ENCODE measurements at regions of chr2 and their contacts with region 1.

Region 1: DNA sequence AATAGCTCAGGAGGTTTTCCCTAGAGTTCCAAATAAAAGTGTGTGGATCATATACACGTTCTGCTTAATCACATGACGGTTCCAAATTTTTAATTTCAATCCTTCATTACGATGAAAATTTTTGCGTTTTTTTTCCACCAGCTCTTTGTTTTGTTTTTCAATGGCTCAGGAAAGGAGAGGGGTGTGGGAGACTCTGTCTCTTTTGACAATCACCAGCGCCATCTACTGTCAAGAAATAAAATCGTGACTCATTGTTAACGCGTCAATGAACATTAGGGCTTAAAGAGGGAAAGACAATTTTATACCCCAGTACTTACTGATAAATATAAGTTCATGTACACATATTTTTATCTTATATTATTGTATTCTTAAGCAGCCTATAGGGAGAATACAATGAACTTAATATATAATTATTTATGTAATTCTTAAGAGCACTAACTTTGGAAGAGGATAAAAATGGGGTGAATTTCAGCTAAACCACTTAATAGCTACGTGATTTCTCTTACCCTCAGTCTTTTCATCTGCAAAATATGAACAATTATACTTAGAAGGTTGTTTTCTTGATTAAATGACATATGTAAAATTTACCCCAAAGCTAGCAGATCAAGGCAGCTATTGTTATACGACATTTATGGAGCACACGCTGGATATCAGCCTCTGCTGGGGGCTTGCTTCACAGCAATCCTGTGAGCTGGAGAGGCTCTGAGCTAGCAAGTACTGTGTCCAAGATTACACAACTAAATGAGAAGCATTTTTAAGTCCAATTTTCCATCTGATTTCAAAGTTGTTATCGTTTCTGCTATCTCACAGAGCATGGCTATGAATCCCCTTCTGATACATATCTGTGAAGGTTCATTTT is 47.4 kb upstream of the RMDN2 start:
- DNase-seq: peak; percentile 35
- ATAC-seq: peak; percentile 84
- H3K4me3 ChIP-seq: no peak overlapping the region
- H3K27ac ChIP-seq: no peak overlapping the region
- H3K4me1 ChIP-seq: no peaks in the 10 kb centered on the region
- H3K27me3 ChIP-seq: no peaks in the 10 kb centered on the region
- CTCF ChIP-seq: peak; percentile 45 to 76 (median 66); a peak in 5 of 6 replicates
- POLR2A ChIP-seq: no peak
- RAD21 ChIP-seq: peak; percentile 88

Region 2: DNA sequence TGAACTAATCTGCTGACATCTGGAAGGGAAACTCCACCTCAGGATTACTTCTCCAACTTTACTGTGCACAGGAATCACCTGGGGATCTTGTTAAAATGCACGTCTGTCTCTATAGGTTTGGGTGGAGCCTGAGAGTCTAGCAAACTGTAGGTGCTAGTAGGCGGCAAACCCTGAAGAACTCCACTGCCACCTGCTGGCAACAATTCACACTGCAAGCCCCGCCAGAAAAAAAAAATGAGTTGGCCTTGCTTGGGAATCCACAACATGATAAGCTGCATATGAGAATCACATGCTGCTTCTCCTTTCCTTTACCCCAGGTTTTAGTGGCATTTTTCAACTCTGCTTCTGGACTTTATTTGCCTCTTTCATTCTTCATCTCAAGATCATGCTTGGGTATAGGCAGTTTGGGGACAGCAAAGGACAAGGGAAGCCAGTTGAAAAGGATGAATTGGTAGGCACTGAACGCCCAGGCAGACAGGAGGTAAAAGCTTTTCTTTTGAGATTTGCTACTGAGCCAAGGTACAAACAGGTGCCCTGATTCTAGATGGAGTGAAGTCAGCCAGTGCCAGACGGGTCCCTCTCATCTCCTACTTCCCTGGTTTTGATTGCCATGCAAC is 1092.4 kb before region 1 on chr2:
- CTCF ChIA-PET with region 1: no interaction called
- POLR2A ChIA-PET with region 1: no interaction called
- RAD21 ChIA-PET with region 1: no interaction called
- intact Hi-C with region 1: loop called (anchors 5 kb)
- DNase-seq: peak; percentile 62
- ATAC-seq: peak; percentile 94
- H3K4me3 ChIP-seq: no peak overlapping the region
- H3K27ac ChIP-seq: no peak overlapping the region
- H3K4me1 ChIP-seq: 0 out of 4 replicates have a peak, but pooled peaks cover 0 to 3% of the 10 kb centered on the region in 2 experiments
- H3K27me3 ChIP-seq: no peaks in the 10 kb centered on the region; the same call in 1 of the 2 replicates
- CTCF ChIP-seq: peak; percentile 68 to 95 (median 94)
- POLR2A ChIP-seq: no peak
- RAD21 ChIP-seq: peak; percentile 70

Region 3: GRCh38 chr2:37287966-37288365 is 589.7 kb before region 1 on chr2:
- CTCF ChIA-PET with region 1: interaction called, 3 read pairs
- POLR2A ChIA-PET with region 1: no interaction called
- RAD21 ChIA-PET with region 1: interaction called in 1 of 2 experiments, 3 read pairs
- intact Hi-C with region 1: loop called (anchors 10 kb)
- DNase-seq: no peak
- ATAC-seq: peak; percentile 71
- H3K4me3 ChIP-seq: no peak overlapping the region
- H3K27ac ChIP-seq: no peak overlapping the region
- H3K4me1 ChIP-seq: peaks cover 0 to 4% of the 10 kb centered on the region in 2 experiments; a peak in 2 of 4 replicates
- H3K27me3 ChIP-seq: no peaks in the 10 kb centered on the region
- CTCF ChIP-seq: peak; percentile 11 to 40 (median 20); a peak in 1 of 6 replicates
- POLR2A ChIP-seq: no peak
- RAD21 ChIP-seq: peak; percentile 66

Region 4: GRCh38 chr2:37394263-37394662 is 483.4 kb before region 1 on chr2:
- CTCF ChIA-PET with region 1: interaction called, 129 read pairs
- POLR2A ChIA-PET with region 1: interaction called, 5 read pairs
- RAD21 ChIA-PET with region 1: interaction called, 20 to 29 read pairs
- intact Hi-C with region 1: loop called (anchors 1 kb)
- DNase-seq: no peak
- ATAC-seq: no peak
- H3K4me3 ChIP-seq: no peak overlapping the region
- H3K27ac ChIP-seq: no peak overlapping the region
- H3K4me1 ChIP-seq: peaks cover 3 to 18% of the 10 kb centered on the region in 2 experiments; a peak in 3 of 4 replicates
- H3K27me3 ChIP-seq: no peaks in the 10 kb centered on the region
- CTCF ChIP-seq: no peak
- POLR2A ChIP-seq: no peak
- RAD21 ChIP-seq: no peak

Region 5: GRCh38 chr2:37402636-37403035 is 475.1 kb before region 1 on chr2:
- CTCF ChIA-PET with region 1: interaction called, 129 read pairs
- POLR2A ChIA-PET with region 1: interaction called, 5 read pairs
- RAD21 ChIA-PET with region 1: interaction called in 1 of 2 experiments, 29 read pairs
- intact Hi-C with region 1: no loop called
- DNase-seq: no peak
- ATAC-seq: no peak
- H3K4me3 ChIP-seq: no peak overlapping the region
- H3K27ac ChIP-seq: no peak overlapping the region
- H3K4me1 ChIP-seq: no peaks in the 10 kb centered on the region
- H3K27me3 ChIP-seq: no peaks in the 10 kb centered on the region
- CTCF ChIP-seq: no peak
- POLR2A ChIP-seq: no peak
- RAD21 ChIP-seq: no peak

Region 6: GRCh38 chr2:37414470-37414949 is 463.2 kb before region 1 on chr2:
- CTCF ChIA-PET with region 1: interaction called, 95 read pairs
- POLR2A ChIA-PET with region 1: interaction called, 4 read pairs
- RAD21 ChIA-PET with region 1: interaction called, 11 to 14 read pairs
- intact Hi-C with region 1: loop called (anchors 1 kb)
- DNase-seq: peak; percentile 42
- ATAC-seq: peak; percentile 91
- H3K4me3 ChIP-seq: no peak overlapping the region
- H3K27ac ChIP-seq: no peak overlapping the region
- H3K4me1 ChIP-seq: no peaks in the 10 kb centered on the region
- H3K27me3 ChIP-seq: no peaks in the 10 kb centered on the region
- CTCF ChIP-seq: peak; percentile 73 to 93 (median 86)
- POLR2A ChIP-seq: no peak
- RAD21 ChIP-seq: peak; percentile 97

Region 7: GRCh38 chr2:37832590-37833197 is 45.0 kb before region 1 on chr2:
- CTCF ChIA-PET with region 1: interaction called, 33 read pairs
- POLR2A ChIA-PET with region 1: no interaction called
- RAD21 ChIA-PET with region 1: interaction called, 3 to 7 read pairs
- intact Hi-C with region 1: loop called (anchors 2 kb)
- DNase-seq: peak; percentile 71
- ATAC-seq: peak; percentile 99
- H3K4me3 ChIP-seq: no peak overlapping the region
- H3K27ac ChIP-seq: no peak overlapping the region
- H3K4me1 ChIP-seq: peaks cover 4 to 6% of the 10 kb centered on the region in 2 experiments; a peak in 1 of 4 replicates
- H3K27me3 ChIP-seq: no peaks in the 10 kb centered on the region
- CTCF ChIP-seq: peak; percentile 84 to 94 (median 85)
- POLR2A ChIP-seq: no peak
- RAD21 ChIP-seq: peak; percentile 98

Measured in HCT116 (cell line).